Kidney (tissue), 22 donors: ENCODE measurements at regions of chr10 and their contacts with region 1.

Region 1: GRCh38 chr10:117545141-117546019 is 2.8 kb downstream of the EMX2 start:
- DNase-seq: peak in 2 of 5 donors; percentile 58 to 76
- H3K4me3 ChIP-seq: peak overlapping the region; percentile 78 to 97 (median 90)
- H3K27ac ChIP-seq: peak overlapping the region; percentile 91 to 97
- H3K4me1 ChIP-seq: peaks cover 0 to 5% (median 2%) of the 10 kb centered on the region in 3 donors
- H3K27me3 ChIP-seq: peaks cover 21% of the 10 kb centered on the region
- CTCF ChIP-seq: no peak

Region 2: DNA sequence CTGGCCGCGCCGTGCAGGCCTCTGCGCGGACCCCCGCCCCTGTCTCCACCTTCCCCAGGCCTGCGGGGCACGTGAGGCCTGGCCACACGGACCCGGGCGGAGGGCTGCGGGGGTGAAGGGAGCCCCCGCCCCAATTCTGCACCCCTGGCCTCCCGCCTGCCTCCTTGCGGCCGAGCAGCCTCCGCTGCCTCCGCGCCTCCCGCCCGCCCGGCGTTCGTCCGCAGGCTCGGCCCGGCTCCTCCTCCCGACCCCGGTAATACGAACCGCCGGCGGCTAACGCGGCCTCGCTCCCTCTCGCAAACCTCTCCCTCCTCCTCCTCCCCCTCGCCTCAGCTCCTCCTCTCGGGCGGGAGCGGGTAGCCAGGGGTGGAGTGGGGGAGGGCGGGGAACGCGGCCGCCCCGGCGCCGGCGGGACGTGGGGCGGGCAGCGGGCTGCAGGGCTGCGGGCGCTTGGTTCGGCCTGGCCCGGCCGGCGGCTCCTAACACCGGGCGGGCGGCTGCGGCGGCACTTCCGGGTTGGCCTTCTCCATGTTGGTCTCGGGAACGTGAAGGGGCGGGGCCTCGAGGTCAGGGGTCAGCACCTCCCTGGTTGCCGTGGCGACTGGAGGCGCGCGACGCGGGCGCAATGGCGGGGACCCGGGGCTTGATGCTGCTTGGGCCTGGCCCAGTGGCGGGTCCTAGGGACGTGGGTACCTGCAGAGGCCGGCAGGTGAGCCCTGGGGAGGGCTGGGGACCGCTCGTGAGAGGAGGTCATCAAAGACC is 501.2 kb after region 1 on chr10 and contains the start of gene RAB11FIP2:
- intact Hi-C with region 1: loop called (anchors 5 kb)
- DNase-seq: peak; percentile 96 to 99 (median 98)
- H3K4me3 ChIP-seq: peak within 1 kb of the TSS; percentile 77 to 92 (median 80)
- H3K27ac ChIP-seq: peak within 1 kb of the TSS; percentile 91
- H3K4me1 ChIP-seq: peaks cover 0 to 13% (median 6%) of the 10 kb centered on the region in 3 donors
- H3K27me3 ChIP-seq: no peaks in the 10 kb centered on the region
- CTCF ChIP-seq: no peak
- total RNA-seq, gene RAB11FIP2: 50.4 TPM